ENCODE measurements at regions of chr13 and their contacts with region 1.

Region 1: GRCh38 chr13:45799451-45799850 is 52.1 kb downstream of the SIAH3 start:
- DNase-seq: peak in 1 of 5 donors; percentile 51
- ATAC-seq: peak in 3 of 4 donors; percentile 60 to 83 (median 71)
- H3K4me3 ChIP-seq: no peak overlapping the region
- H3K27ac ChIP-seq: no peak overlapping the region
- H3K4me1 ChIP-seq: peaks cover 0 to 9% (median 0%) of the 10 kb centered on the region in 12 donors
- H3K27me3 ChIP-seq: no peaks in the 10 kb centered on the region
- CTCF ChIP-seq: no peak
- POLR2A ChIP-seq: no peak

Region 2: GRCh38 chr13:45592758-45593157 is 206.7 kb before region 1 on chr13:
- intact Hi-C with region 1: no loop called
- DNase-seq: no peak
- ATAC-seq: no peak
- H3K4me3 ChIP-seq: no peak overlapping the region
- H3K27ac ChIP-seq: no peak overlapping the region
- H3K4me1 ChIP-seq: no peaks in the 10 kb centered on the region
- H3K27me3 ChIP-seq: peaks cover 0 to 7% (median 0%) of the 10 kb centered on the region in 9 donors
- CTCF ChIP-seq: no peak
- POLR2A ChIP-seq: no peak

Region 3: GRCh38 chr13:45889590-45890243 is 90.3 kb after region 1 on chr13:
- intact Hi-C with region 1: loop called in 1 of 10 experiments (anchors 5 kb)
- DNase-seq: no peak
- ATAC-seq: peak in 1 of 4 donors; percentile 16
- H3K4me3 ChIP-seq: no peak overlapping the region
- H3K27ac ChIP-seq: peak overlapping the region in 1 of 12 donors; percentile 11
- H3K4me1 ChIP-seq: no peaks in the 10 kb centered on the region
- H3K27me3 ChIP-seq: peaks cover 0 to 7% (median 0%) of the 10 kb centered on the region in 9 donors
- CTCF ChIP-seq: no peak
- POLR2A ChIP-seq: no peak

Region 4: DNA sequence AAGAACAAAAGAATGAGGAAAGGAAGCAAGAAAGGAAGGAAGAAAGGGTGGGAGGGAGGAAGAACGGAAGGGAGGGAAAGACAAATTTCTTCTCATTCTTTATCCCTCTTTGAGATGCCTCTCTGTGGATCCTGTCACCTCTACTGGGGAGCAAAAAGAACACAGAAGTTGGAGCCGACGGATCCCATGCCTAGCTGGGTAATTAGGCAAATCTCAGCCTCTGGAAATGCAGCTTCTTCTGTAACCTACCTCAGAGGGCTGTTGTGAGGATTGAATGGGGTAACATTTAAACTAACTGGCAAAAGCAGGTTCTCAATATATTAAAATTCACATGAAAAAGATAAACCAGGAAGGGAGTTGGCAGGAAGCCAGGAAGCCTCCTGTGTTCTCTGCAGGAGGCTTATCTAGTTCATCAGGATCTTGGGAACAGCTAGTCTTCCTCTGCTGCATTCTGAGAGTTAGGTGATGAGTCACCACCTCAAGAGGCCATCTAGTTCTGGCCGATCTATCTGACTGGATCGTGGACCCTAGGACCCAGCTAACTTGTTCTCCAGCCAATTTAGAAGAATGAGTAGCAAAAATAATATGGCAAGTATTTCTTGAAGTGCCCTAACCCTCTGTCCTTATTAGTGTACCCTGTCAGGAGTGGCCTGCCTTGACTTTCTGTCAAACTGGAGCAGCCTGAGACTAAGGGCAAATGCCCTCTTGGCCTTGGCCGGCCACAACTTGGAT is 320.6 kb after region 1 on chr13:
- intact Hi-C with region 1: loop called in 5 of 10 experiments (anchors 5 to 10 kb)
- DNase-seq: peak in 1 of 5 donors; percentile 28
- ATAC-seq: peak in 2 of 4 donors; percentile 31 to 83
- H3K4me3 ChIP-seq: no peak overlapping the region
- H3K27ac ChIP-seq: no peak overlapping the region
- H3K4me1 ChIP-seq: peaks cover 0 to 9% (median 0%) of the 10 kb centered on the region in 12 donors
- H3K27me3 ChIP-seq: no peaks in the 10 kb centered on the region
- CTCF ChIP-seq: no peak
- POLR2A ChIP-seq: no peak

Region 5: DNA sequence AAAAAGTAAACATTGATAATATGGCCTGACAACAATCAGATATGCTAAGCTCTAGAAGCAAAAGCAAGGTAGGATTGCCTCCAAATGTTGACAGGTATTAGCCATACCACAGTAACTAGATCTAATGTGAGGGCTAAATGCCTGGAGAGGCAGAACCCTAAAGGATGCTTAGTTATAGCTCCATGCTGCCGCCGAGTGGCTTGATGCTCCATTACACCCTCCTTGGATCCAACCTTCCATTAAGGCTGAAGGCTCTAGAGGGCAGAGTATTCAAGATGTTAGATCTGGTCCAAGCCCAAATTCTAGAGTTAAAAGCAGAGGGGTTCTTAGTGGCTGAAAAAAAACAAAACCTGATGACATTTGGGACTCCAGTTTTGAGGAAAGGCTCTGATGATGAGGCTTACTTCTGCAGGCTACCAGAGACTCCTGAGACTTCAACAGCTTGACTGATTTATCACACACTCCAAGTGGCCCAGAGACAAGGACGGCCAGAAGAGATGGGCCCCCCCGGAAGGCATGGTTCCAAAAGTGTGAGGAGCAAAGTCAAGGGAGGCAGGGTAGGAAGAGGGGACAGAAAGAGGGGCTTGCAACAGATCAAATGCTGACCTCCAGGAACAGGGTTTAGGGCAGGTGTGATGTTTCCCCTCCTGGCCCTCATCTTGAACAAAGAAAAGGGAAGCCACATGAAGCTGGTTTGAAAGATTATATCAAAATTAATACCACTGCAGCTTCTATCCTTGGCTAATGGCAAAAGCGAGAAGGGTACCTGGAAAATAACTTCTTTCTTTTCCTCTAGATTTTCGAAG is 327.3 kb after region 1 on chr13:
- intact Hi-C with region 1: loop called in 5 of 10 experiments (anchors 5 to 10 kb)
- DNase-seq: peak; percentile 45 to 68 (median 52)
- ATAC-seq: peak in 3 of 4 donors; percentile 87 to 90 (median 89)
- H3K4me3 ChIP-seq: no peak overlapping the region
- H3K27ac ChIP-seq: no peak overlapping the region
- H3K4me1 ChIP-seq: peaks cover 0 to 24% (median 0%) of the 10 kb centered on the region in 12 donors
- H3K27me3 ChIP-seq: peaks cover 0 to 34% (median 0%) of the 10 kb centered on the region in 9 donors
- CTCF ChIP-seq: peak; percentile 43 to 74 (median 62)
- POLR2A ChIP-seq: no peak